Activated CD8-positive, alpha-beta T cell treated with anti-CD3 and anti-CD28 coated beads for 36 hours (primary cell): ENCODE measurements at regions of chr3 and their contacts with region 1.

Region 1: DNA sequence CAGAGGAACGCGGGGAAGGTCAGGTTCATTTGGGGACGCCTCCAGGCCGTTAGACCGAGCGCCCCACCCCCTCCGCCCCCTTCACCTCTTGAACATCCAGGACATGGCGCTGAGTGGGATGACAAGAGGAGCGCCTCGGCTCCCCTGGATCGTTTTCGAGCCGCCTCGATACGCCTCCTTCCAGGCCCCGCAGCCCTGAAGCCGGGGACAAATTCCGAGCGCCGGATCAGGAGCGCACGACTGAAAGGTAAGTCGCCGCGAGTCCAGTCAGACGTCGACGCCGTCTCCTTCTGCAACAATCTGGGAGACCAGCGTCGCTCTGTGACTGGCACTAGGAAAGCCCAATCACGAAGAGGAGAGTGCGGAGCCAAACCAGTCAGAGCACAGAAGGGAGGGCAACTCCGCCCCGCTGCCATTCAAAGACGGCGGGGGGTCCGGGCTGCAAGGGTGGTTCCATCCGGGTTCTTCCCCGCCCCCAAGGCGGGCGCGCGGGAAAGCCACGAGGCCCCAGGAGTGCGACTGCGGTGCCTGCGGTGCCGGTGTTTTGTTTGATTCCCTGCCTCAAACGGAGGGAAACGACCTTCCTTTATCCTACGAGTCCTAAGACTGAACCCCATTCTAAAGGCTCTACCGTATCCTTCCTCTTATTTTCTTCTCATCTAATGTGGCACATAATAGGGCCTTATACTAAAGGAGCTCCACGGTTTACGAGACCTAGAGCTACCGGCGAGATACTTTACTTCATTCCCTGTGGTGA is at the start of gene HLTF:
- DNase-seq: peak; percentile 95
- ATAC-seq: peak; percentile 100
- H3K4me3 Mint-ChIP-seq: peak within 1 kb of the TSS; percentile 92
- H3K27ac Mint-ChIP-seq: peak within 1 kb of the TSS; percentile 88
- H3K4me1 Mint-ChIP-seq: peaks cover 15% of the 10 kb centered on the region
- H3K27me3 Mint-ChIP-seq: no peaks in the 10 kb centered on the region
- CTCF ChIP-seq: no peak
- total RNA-seq, gene HLTF: 20.7 to 23.8 TPM

Region 2: DNA sequence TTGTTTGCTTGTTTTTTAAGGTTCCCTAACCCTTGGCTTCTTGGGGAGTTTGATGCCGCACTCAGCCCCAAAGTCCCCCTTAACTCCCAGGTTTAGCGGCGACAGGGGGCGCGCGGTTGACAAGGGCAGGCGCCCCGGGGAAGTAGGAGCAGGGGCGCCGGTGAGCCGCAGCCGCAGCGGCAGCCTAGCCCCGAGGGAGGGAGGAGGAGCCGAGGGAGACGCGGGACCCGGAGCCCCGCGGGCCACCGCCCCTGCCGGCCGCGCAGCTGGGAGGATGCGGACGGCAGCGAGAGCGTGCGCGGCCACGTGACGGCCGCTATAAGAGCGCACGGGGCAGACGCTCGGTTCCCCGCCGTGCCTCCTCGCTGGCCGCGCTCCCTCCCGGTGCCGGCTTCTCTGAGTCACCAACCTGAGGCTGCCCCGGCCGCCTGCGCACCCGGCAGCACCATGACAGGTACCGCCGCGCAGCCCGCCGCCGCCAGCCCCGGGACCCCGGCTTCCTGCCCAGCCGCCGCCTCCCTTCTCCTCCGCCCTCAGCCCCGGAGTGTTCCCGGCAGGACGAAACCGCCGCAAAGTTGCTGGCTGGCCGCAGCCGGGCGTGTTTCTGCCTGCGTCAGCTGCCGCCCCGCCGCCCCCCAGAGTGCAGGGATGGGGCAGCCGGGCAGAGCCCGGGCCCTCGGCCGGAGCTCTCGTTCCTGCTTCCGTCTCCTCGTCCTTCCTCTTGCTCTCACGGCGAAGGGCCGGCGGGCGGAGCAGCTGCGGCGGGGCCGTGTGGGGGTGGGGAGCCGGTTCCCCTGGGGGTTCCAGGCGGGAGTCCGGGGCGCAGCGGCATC is 95.0 kb before region 1 on chr3 and contains the start of gene GYG1:
- CTCF ChIA-PET with region 1: no interaction called
- POLR2A ChIA-PET with region 1: no interaction called
- intact Hi-C with region 1: loop called (anchors 5 kb)
- DNase-seq: peak; percentile 81
- ATAC-seq: peak; percentile 87
- H3K4me3 Mint-ChIP-seq: peak within 1 kb of the TSS; percentile 79
- H3K27ac Mint-ChIP-seq: peak within 1 kb of the TSS; percentile 86
- H3K4me1 Mint-ChIP-seq: peaks cover 27% of the 10 kb centered on the region
- H3K27me3 Mint-ChIP-seq: no peaks in the 10 kb centered on the region
- CTCF ChIP-seq: peak; percentile 34
- total RNA-seq, gene GYG1: 16.0 to 18.3 TPM